CD4-positive, alpha-beta memory T cell (primary cell): ENCODE measurements at regions of chr14 and their contacts with region 1.

Region 1: GRCh38 chr14:91286530-91286937 is 42.0 kb upstream of the GPR68 start:
- DNase-seq: peak; percentile 66 to 77 (median 74)
- H3K4me3 ChIP-seq: no peak overlapping the region
- H3K4me3 Mint-ChIP-seq: no peak overlapping the region
- H3K27ac ChIP-seq: no peak overlapping the region
- H3K27ac Mint-ChIP-seq: peak overlapping the region in 6 of 7 donors; percentile 53 to 92 (median 76)
- H3K4me1 ChIP-seq: peaks cover 12% of the 10 kb centered on the region
- H3K4me1 Mint-ChIP-seq: peaks cover 3 to 19% (median 6%) of the 10 kb centered on the region in 4 donors
- H3K27me3 ChIP-seq: no peaks in the 10 kb centered on the region
- H3K27me3 Mint-ChIP-seq: no peaks in the 10 kb centered on the region

Region 2: DNA sequence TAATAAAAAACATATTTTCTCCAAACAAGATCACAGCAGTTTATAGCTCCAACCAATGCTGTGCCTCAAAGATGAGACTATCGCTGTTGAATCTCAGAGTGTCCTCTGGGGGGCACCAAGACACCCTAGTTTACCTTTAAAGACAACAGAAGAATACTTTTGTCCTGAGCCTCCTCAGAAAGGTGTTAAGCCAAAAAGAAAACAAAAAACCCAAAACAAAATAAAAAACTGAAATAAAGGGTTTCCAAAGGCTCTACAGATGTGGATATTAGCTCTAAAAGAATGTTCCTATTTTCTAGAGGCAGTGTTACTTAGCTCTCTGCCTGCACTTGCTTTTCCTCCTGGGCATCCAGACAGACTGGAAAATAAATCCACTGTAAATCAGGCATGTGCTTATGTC is 383.4 kb before region 1 on chr14:
- CTCF ChIA-PET with region 1: interaction called, 12 read pairs
- POLR2A ChIA-PET with region 1: no interaction called
- intact Hi-C with region 1: loop called (anchors 2 kb)
- DNase-seq: peak; percentile 58 to 63 (median 61)
- H3K4me3 ChIP-seq: no peak overlapping the region
- H3K4me3 Mint-ChIP-seq: no peak overlapping the region
- H3K27ac ChIP-seq: no peak overlapping the region
- H3K27ac Mint-ChIP-seq: peak overlapping the region in 1 of 7 donors; percentile 6
- H3K4me1 ChIP-seq: no peaks in the 10 kb centered on the region
- H3K4me1 Mint-ChIP-seq: peaks cover 0 to 9% (median 3%) of the 10 kb centered on the region in 4 donors
- H3K27me3 ChIP-seq: no peaks in the 10 kb centered on the region
- H3K27me3 Mint-ChIP-seq: no peaks in the 10 kb centered on the region

Region 3: DNA sequence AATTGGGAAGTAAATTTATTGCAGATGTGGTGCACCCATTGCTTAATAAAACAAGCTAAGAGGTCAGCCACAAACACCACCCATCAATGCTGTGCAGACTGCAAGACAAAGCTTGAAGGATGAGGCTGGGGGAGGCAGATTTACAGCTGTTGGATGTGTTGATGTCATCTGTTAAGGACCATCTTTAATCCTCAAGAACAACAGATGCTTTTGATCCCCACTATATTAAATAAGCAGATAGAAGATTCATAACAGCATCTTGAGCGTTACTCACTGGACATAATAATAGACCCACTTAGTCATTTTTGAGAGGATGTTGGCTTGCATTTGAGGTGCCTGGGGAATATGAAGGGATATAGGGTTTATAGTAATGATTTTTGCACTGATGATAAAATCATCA is 100.8 kb before region 1 on chr14:
- CTCF ChIA-PET with region 1: interaction called, 480 read pairs
- POLR2A ChIA-PET with region 1: no interaction called
- intact Hi-C with region 1: no loop called
- DNase-seq: no peak
- H3K4me3 ChIP-seq: no peak overlapping the region
- H3K4me3 Mint-ChIP-seq: no peak overlapping the region
- H3K27ac ChIP-seq: no peak overlapping the region
- H3K27ac Mint-ChIP-seq: peak overlapping the region in 1 of 7 donors; percentile 27
- H3K4me1 ChIP-seq: no peaks in the 10 kb centered on the region
- H3K4me1 Mint-ChIP-seq: peaks cover 0 to 5% (median under 1%) of the 10 kb centered on the region in 4 donors
- H3K27me3 ChIP-seq: no peaks in the 10 kb centered on the region
- H3K27me3 Mint-ChIP-seq: no peaks in the 10 kb centered on the region

Region 4: GRCh38 chr14:91193069-91193468 is 93.5 kb before region 1 on chr14:
- CTCF ChIA-PET with region 1: interaction called, 22 read pairs
- POLR2A ChIA-PET with region 1: no interaction called
- intact Hi-C with region 1: no loop called
- DNase-seq: no peak
- H3K4me3 ChIP-seq: no peak overlapping the region
- H3K4me3 Mint-ChIP-seq: peak overlapping the region in 1 of 8 donors; percentile 55
- H3K27ac ChIP-seq: no peak overlapping the region
- H3K27ac Mint-ChIP-seq: peak overlapping the region in 4 of 7 donors; percentile 3 to 44 (median 40)
- H3K4me1 ChIP-seq: peaks cover 14% of the 10 kb centered on the region
- H3K4me1 Mint-ChIP-seq: peaks cover 18 to 31% (median 25%) of the 10 kb centered on the region in 4 donors
- H3K27me3 ChIP-seq: no peaks in the 10 kb centered on the region
- H3K27me3 Mint-ChIP-seq: no peaks in the 10 kb centered on the region

Region 5: GRCh38 chr14:91228112-91229004 is 58.2 kb before region 1 on chr14:
- CTCF ChIA-PET with region 1: interaction called, 7 read pairs
- POLR2A ChIA-PET with region 1: interaction called, 3 read pairs
- intact Hi-C with region 1: loop called (anchors 5 kb)
- DNase-seq: peak; percentile 74 to 96 (median 77)
- H3K4me3 ChIP-seq: peak overlapping the region; percentile 2 to 28
- H3K4me3 Mint-ChIP-seq: peak overlapping the region; percentile 41 to 97 (median 86)
- H3K27ac ChIP-seq: peak overlapping the region; percentile 88
- H3K27ac Mint-ChIP-seq: peak overlapping the region; percentile 97 to 100 (median 99)
- H3K4me1 ChIP-seq: peaks cover 98% of the 10 kb centered on the region
- H3K4me1 Mint-ChIP-seq: peaks cover 78 to 100% (median 91%) of the 10 kb centered on the region in 4 donors
- H3K27me3 ChIP-seq: no peaks in the 10 kb centered on the region
- H3K27me3 Mint-ChIP-seq: no peaks in the 10 kb centered on the region

Region 6: DNA sequence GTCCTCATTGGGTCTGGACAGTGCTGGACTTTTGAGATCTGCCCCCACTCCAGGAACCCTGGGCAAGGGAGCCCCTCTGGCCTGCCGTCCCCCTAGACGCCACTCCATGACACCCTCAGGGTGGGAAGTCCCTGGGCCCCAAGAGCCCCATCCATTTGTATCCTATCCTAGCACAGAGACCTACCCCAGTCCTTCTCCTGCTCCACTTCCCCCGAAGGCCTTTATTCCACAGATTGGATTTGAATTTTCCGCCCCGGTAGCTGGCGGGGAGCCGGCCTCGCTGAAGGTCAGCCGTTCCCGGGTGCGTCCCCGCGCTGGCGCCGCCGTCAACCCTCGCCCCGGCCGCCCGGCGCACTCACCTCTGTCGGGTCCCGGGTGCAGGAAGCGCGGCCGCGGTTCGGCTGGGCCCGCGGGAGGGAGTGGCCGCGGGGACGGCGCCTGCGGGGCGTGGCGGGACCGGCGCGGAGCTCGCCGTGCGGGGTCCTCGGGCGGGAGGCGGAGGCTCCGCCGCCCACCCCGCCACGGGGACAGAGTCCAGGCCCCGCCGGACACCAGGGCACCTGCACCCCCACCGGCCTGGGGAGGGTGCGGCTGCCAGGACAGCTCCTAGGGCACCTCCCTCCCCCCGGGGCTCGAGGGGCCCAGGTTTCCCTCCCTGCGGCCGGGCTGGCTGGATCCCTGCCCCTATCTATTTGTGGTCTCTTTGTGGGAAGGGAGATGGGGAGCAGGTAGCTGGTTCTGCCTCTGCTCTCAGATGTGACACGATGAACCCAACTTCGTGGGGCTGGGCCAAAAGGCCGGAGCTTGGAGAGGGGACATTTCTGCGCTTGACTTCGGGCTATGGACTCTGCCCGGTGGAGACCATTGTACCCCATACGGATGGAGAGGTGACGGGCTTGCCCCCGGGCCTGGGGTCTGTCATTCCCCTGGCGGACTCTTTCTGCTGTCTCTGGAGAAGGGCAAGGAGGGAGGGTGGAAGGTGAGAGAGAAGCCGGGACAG is 22.1 kb before region 1 on chr14:
- CTCF ChIA-PET with region 1: interaction called, 14 read pairs
- POLR2A ChIA-PET with region 1: interaction called, 6 read pairs
- intact Hi-C with region 1: no loop called
- DNase-seq: peak in 2 of 5 donors; percentile 39 to 41
- H3K4me3 ChIP-seq: peak overlapping the region in 1 of 2 donors; percentile 32
- H3K4me3 Mint-ChIP-seq: peak overlapping the region; percentile 69 to 85 (median 79)
- H3K27ac ChIP-seq: peak overlapping the region; percentile 31
- H3K27ac Mint-ChIP-seq: peak overlapping the region in 6 of 7 donors; percentile 60 to 97 (median 84)
- H3K4me1 ChIP-seq: peaks cover 45% of the 10 kb centered on the region
- H3K4me1 Mint-ChIP-seq: peaks cover 39 to 69% (median 46%) of the 10 kb centered on the region in 4 donors
- H3K27me3 ChIP-seq: no peaks in the 10 kb centered on the region
- H3K27me3 Mint-ChIP-seq: no peaks in the 10 kb centered on the region

Region 7: DNA sequence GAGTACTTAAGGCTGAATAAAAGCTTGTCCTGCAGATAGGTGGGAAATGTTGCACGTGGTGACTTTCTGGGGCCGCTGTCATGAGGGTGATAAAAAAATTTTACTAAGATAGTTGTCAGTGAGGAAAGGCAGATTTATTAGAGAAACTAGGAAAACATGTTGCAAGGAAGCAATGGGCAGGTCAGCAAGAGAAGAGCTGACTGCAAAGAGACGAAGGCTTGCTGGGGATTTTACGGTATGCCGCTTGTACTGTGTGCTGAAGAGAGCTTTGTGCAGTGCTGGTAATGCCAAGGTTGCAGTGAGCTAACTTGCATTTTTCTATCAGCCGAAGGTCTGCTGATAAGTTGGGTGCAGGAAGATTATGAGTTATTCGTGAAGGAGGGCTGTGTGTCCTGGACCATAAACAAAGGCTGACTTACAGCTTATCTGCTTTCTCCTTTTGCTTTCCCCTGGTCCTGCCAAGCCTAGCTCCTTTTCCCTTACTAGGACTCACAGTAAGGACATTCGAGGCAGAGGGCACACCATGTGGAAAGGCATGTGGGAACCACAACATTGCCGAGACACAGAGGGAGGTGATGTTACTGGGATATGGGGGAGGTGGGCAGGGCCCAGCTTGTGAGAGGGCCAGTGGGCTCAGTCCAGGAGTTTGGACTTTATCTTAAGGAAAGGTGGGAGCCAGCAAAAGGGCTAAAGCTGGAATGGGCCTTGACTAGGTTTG is 138.4 kb after region 1 on chr14:
- CTCF ChIA-PET with region 1: interaction called, 11 read pairs
- POLR2A ChIA-PET with region 1: no interaction called
- intact Hi-C with region 1: no loop called
- DNase-seq: no peak
- H3K4me3 ChIP-seq: no peak overlapping the region
- H3K4me3 Mint-ChIP-seq: no peak overlapping the region
- H3K27ac ChIP-seq: no peak overlapping the region
- H3K27ac Mint-ChIP-seq: peak overlapping the region in 1 of 7 donors; percentile 18
- H3K4me1 ChIP-seq: peaks cover 8% of the 10 kb centered on the region
- H3K4me1 Mint-ChIP-seq: peaks cover 15 to 22% (median 21%) of the 10 kb centered on the region in 4 donors
- H3K27me3 ChIP-seq: no peaks in the 10 kb centered on the region
- H3K27me3 Mint-ChIP-seq: no peaks in the 10 kb centered on the region